Activated CD4-positive, alpha-beta T cell treated with anti-CD3 and anti-CD28 coated beads for 36 hours (primary cell): ENCODE measurements at regions of chr7 and their contacts with region 1.

Region 1: GRCh38 chr7:54758702-54759592 is at the start of gene SEC61G:
- DNase-seq: peak; percentile 97
- ATAC-seq: peak; percentile 91
- H3K4me3 Mint-ChIP-seq: peak within 1 kb of the TSS; percentile 91
- H3K27ac Mint-ChIP-seq: peak within 1 kb of the TSS; percentile 95
- H3K4me1 Mint-ChIP-seq: peaks cover 20% of the 10 kb centered on the region
- H3K27me3 Mint-ChIP-seq: peaks cover 2% of the 10 kb centered on the region
- total RNA-seq, gene SEC61G: 78.4 to 191 TPM

Region 2: DNA sequence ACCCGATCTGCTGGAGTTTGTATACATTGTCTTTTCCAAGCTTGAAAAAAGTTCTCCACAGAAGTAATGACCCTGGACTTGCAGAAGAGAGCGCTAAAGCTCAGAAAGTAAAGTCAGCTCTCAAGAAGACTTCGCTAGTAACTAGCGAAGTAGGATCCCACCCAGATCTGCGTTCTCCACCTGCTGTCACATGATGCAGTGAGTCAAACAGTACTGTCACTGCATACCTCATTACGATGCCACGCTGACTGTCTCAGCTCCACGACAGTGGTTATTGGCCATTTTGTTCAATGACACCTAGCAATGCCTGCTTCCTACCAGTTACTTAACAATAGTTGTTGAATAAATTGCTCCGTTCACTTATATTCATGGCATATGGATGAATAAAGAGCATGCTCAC is 29.7 kb after region 1 on chr7:
- CTCF ChIA-PET with region 1: interaction called, 4 read pairs
- POLR2A ChIA-PET with region 1: interaction called, 4 read pairs
- intact Hi-C with region 1: loop called in 1 of 2 experiments (anchors 1 kb)
- DNase-seq: peak; percentile 68
- ATAC-seq: peak; percentile 100
- H3K4me3 Mint-ChIP-seq: no peak overlapping the region
- H3K27ac Mint-ChIP-seq: no peak overlapping the region
- H3K4me1 Mint-ChIP-seq: peaks cover 6% of the 10 kb centered on the region
- H3K27me3 Mint-ChIP-seq: peaks cover 38% of the 10 kb centered on the region

Region 3: DNA sequence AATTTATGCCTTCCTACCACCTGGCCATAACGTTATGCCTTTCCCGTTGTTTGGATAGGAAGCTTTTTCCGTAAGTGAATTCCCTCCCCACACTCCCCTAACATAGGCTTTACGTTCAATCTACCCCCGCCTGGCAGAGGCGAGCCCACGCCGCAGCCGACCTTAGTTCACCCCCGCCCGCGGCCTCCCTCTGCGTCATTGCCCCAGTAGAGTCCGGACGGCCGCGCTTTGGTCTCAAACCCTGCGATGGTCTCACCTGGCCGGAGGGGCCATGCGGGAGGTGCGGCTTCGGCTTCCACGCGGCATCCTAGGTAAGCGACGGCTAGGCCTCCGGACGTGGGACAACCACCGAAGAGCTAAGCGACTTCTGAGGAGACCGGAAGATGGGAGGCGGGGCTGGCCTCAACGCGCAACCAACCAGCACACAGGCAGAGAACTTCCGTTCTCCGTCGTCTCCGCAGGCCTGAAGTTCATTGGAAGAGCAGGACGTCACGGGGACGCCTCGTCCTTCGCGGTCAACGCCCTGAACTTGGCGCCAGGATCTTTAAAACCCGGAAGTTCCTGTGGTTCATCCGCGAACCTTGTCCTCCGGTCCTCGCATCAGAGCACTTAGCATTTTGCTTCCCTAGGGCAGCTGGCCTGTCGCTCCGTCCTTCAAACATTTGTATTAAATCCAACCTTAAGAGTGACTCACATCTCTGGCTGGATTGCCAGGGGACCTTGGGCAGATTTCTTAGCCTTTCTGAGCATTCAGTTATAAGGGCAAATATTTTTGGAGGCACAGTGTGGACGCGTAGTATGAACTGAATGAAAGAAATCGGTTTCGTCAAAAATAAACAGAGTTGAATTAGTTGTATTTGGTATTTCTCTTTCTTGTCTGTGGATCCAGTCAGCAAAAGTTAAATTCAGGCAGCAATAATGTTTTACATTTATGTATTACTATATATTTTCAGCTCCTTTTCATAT is 1347.4 kb after region 1 on chr7 and contains the start of gene CHCHD2:
- CTCF ChIA-PET with region 1: no interaction called
- POLR2A ChIA-PET with region 1: no interaction called
- intact Hi-C with region 1: loop called in 1 of 2 experiments (anchors 1 kb)
- DNase-seq: peak; percentile 96
- ATAC-seq: peak; percentile 98
- H3K4me3 Mint-ChIP-seq: peak within 1 kb of the TSS; percentile 90
- H3K27ac Mint-ChIP-seq: peak within 1 kb of the TSS; percentile 99
- H3K4me1 Mint-ChIP-seq: peaks cover 37% of the 10 kb centered on the region
- H3K27me3 Mint-ChIP-seq: no peaks in the 10 kb centered on the region
- total RNA-seq, gene CHCHD2: 537 to 693 TPM